HepG2 (cell line): ENCODE measurements at regions of chr19 and their contacts with region 1.

Region 1: GRCh38 chr19:4342615-4343369 is 570 bp upstream of the MPND start:
- DNase-seq: peak; percentile 100
- ATAC-seq: peak; percentile 93
- H3K4me3 ChIP-seq: peak overlapping the region; percentile 69 to 88 (median 88)
- H3K27ac ChIP-seq: peak overlapping the region; percentile 98
- H3K4me1 ChIP-seq: peaks cover 55% of the 10 kb centered on the region
- H3K27me3 ChIP-seq: no peaks in the 10 kb centered on the region; a peak in 1 of 5 replicates
- CTCF ChIP-seq: peak; percentile 51
- EP300 ChIP-seq: no peak; a peak in 1 of 4 replicates
- POLR2A ChIP-seq: peak; percentile 63 to 91
- RAD21 ChIP-seq: peak; percentile 25

Region 2: GRCh38 chr19:3626473-3627350 is 716.1 kb before region 1 on chr19 and contains the start of gene CACTIN:
- CTCF ChIA-PET with region 1: no interaction called
- POLR2A ChIA-PET with region 1: no interaction called
- in situ Hi-C with region 1: no loop called
- intact Hi-C with region 1: loop called (anchors 5 kb)
- DNase-seq: peak; percentile 97
- ATAC-seq: peak; percentile 93
- H3K4me3 ChIP-seq: peak within 1 kb of the TSS; percentile 86 to 91 (median 89)
- H3K27ac ChIP-seq: peak within 1 kb of the TSS; percentile 97
- H3K4me1 ChIP-seq: peaks cover 18% of the 10 kb centered on the region
- H3K27me3 ChIP-seq: no peaks in the 10 kb centered on the region; a peak in 1 of 5 replicates
- CTCF ChIP-seq: 0 out of 2 replicates have a peak, but pooled peaks have one; percentile 25
- EP300 ChIP-seq: peak in 1 of 2 experiments; percentile 25; a peak in 1 of 4 replicates
- POLR2A ChIP-seq: peak; percentile 87 to 89
- RAD21 ChIP-seq: no peak; the same call in 1 of the 2 replicates
- total RNA-seq, gene CACTIN: 11.1 and 16.6 TPM in 2 replicates

Region 3: DNA sequence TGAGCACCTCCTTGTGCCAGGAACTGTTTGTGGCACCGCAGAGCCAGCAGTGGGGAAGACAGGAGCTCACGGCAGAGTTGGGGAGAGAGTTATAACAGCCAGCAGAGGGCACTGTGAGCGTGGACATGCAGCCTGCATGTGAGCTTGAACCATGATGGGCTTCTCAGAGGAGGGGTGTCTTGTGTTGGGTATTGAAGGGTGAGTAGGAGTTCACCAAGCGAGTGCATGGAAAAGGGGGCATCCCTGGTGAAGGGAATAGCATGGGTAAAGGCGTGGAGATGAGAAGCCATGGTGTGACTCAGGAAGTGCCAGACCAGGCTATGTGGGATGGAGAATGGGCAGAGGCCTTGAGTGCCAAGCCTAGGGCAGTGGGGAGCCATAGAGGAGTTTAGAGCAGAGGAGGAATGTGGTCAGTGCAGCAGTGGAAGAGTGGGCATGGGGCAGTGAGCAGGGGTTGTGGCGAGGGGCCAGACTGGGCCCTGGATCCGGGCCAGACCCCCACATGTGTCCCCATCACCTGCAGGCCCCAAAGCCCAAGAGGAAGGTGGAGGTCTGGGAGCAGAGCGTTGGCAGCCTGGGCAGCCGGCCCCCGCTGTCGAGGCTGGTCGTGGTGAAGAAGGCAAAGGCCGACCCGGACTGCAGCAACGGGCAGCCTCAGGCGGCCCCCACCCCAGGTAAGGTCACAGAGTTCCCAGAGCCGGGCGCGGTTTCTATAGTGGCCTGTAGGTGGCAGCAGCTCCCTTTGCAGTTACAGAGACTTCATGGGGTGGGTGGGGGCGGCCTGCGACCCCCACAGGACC is 75.5 kb before region 1 on chr19:
- CTCF ChIA-PET with region 1: no interaction called
- POLR2A ChIA-PET with region 1: interaction called, 23 read pairs
- in situ Hi-C with region 1: no loop called
- intact Hi-C with region 1: loop called (anchors 2 kb)
- DNase-seq: peak; percentile 72
- ATAC-seq: peak; percentile 88
- H3K4me3 ChIP-seq: no peak overlapping the region
- H3K27ac ChIP-seq: peak overlapping the region; percentile 73
- H3K4me1 ChIP-seq: peaks cover 20% of the 10 kb centered on the region
- H3K27me3 ChIP-seq: no peaks in the 10 kb centered on the region
- CTCF ChIP-seq: peak; percentile 90
- EP300 ChIP-seq: no peak
- POLR2A ChIP-seq: no peak
- RAD21 ChIP-seq: peak; percentile 72

Region 4: DNA sequence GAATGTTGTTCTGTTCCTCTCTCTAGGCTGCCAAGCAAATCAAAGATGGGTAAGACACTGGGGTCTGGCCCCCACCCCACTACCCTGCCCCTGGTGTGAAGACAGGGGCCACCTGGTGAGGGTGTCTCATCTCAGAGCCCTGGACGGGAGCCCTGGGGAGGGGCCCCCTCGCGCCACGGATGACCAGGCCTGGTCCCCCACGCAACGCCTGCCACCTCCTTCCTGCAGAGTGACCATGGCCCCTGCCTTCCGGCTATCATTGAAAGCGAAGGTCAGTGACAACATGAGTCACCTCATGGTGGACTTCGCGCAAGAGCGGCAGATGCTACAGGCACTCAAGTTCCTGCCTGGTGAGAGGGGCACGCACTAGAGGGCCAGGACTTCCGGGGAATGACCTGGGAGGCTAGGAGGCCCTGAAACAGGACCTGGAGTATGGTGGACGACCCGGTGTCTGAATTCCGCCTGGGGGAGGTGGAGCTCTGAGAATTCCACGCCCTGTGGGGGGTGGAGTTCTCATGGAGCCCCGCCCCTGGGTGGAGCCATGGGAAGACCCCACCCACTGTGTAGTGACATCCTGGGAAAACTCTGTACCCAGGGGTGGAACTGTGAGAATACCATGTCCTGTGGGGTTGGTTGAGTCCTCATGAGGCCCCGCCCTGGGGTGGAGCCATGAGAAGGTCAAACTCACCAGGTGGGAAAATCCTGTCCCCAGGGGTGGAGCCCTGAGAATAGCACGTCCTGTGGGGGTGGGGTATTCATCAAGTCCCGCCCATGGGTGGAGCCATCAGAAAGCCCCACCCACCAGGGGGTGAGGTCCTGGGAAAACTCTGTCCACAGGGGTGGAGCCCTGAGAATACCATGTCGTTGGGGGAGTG is 32.3 kb before region 1 on chr19:
- CTCF ChIA-PET with region 1: no interaction called
- POLR2A ChIA-PET with region 1: interaction called, 66 read pairs
- in situ Hi-C with region 1: no loop called
- intact Hi-C with region 1: loop called (anchors 1 kb)
- DNase-seq: peak; percentile 94
- ATAC-seq: peak; percentile 93
- H3K4me3 ChIP-seq: peak overlapping the region in 1 of 3 experiments; percentile 33; a peak in 2 of 6 replicates
- H3K27ac ChIP-seq: peak overlapping the region; percentile 77
- H3K4me1 ChIP-seq: peaks cover 60% of the 10 kb centered on the region
- H3K27me3 ChIP-seq: peaks cover 3% of the 10 kb centered on the region in 2 experiments; a peak in 2 of 5 replicates
- CTCF ChIP-seq: peak; percentile 45; the same call in 1 of the 2 replicates
- EP300 ChIP-seq: peak in 1 of 2 experiments; percentile 59; a peak in 3 of 4 replicates
- POLR2A ChIP-seq: peak; percentile 63 to 66
- RAD21 ChIP-seq: peak; percentile 40; the same call in 1 of the 2 replicates

Region 5: GRCh38 chr19:4328243-4328990 is 14.4 kb before region 1 on chr19:
- CTCF ChIA-PET with region 1: no interaction called
- POLR2A ChIA-PET with region 1: interaction called, 10 read pairs
- in situ Hi-C with region 1: no loop called
- intact Hi-C with region 1: no loop called
- DNase-seq: no peak
- ATAC-seq: peak; percentile 67
- H3K4me3 ChIP-seq: no peak overlapping the region
- H3K27ac ChIP-seq: no peak overlapping the region
- H3K4me1 ChIP-seq: no peaks in the 10 kb centered on the region
- H3K27me3 ChIP-seq: no peaks in the 10 kb centered on the region
- CTCF ChIP-seq: no peak
- EP300 ChIP-seq: no peak
- POLR2A ChIP-seq: no peak
- RAD21 ChIP-seq: no peak

Region 6: DNA sequence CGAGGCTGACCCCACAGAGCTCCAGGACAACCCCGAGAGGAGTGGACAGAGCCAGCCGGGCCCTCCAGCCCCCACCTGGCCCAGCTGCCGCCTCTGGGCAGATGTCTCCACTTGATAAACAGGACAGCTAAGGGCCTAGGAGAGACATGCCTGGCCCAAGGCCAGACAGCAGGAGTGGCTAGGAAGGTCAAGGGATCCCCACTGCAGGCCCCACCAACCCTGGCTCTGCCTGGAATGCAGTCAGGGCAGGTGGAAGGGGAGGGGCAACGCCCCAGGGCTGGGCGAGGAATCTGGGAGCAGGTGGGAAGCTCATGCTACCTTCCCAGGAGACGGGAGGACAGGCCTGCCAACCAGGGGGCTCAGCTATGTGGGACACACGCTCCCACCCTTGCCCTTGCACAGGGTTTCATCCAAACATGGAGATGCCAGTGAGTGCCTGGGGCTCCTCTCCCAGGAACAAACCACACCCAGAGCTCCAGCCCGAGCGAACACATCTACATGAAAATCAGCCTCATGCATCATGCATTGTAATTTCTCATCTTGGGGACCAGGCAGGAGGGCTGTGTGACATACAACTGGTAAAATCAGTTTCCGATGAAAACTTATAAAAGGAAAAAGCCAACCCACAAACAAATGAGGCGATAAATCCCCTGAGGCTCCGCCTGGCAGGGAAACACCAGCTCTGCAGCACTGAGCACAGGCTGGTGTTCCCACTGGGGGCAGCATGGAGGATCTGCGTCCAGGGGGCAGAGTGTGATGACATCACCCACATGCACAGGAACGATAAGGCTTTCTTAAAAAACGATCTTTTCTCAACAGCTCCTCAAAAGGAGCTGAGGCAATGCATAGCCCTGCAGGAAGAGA is 32.6 kb after region 1 on chr19:
- CTCF ChIA-PET with region 1: no interaction called
- POLR2A ChIA-PET with region 1: interaction called, 30 read pairs
- in situ Hi-C with region 1: no loop called
- intact Hi-C with region 1: no loop called
- DNase-seq: peak; percentile 75
- ATAC-seq: peak; percentile 61
- H3K4me3 ChIP-seq: peak overlapping the region in 1 of 3 experiments; percentile 53; a peak in 2 of 6 replicates
- H3K27ac ChIP-seq: peak overlapping the region; percentile 84
- H3K4me1 ChIP-seq: peaks cover 42% of the 10 kb centered on the region
- H3K27me3 ChIP-seq: no peaks in the 10 kb centered on the region
- CTCF ChIP-seq: peak; percentile 45
- EP300 ChIP-seq: no peak
- POLR2A ChIP-seq: no peak
- RAD21 ChIP-seq: no peak

Region 7: GRCh38 chr19:4415352-4415751 is 72.6 kb after region 1 on chr19:
- CTCF ChIA-PET with region 1: no interaction called
- POLR2A ChIA-PET with region 1: interaction called, 10 read pairs
- in situ Hi-C with region 1: no loop called
- intact Hi-C with region 1: no loop called
- DNase-seq: no peak
- ATAC-seq: peak; percentile 48; the same call in 2 of the 3 replicates
- H3K4me3 ChIP-seq: no peak overlapping the region
- H3K27ac ChIP-seq: peak overlapping the region; percentile 38
- H3K4me1 ChIP-seq: peaks cover 38% of the 10 kb centered on the region
- H3K27me3 ChIP-seq: no peaks in the 10 kb centered on the region
- CTCF ChIP-seq: no peak
- EP300 ChIP-seq: no peak
- POLR2A ChIP-seq: no peak
- RAD21 ChIP-seq: no peak